ENCODE measurements at regions of chr7 and their contacts with region 1.

Region 1: DNA sequence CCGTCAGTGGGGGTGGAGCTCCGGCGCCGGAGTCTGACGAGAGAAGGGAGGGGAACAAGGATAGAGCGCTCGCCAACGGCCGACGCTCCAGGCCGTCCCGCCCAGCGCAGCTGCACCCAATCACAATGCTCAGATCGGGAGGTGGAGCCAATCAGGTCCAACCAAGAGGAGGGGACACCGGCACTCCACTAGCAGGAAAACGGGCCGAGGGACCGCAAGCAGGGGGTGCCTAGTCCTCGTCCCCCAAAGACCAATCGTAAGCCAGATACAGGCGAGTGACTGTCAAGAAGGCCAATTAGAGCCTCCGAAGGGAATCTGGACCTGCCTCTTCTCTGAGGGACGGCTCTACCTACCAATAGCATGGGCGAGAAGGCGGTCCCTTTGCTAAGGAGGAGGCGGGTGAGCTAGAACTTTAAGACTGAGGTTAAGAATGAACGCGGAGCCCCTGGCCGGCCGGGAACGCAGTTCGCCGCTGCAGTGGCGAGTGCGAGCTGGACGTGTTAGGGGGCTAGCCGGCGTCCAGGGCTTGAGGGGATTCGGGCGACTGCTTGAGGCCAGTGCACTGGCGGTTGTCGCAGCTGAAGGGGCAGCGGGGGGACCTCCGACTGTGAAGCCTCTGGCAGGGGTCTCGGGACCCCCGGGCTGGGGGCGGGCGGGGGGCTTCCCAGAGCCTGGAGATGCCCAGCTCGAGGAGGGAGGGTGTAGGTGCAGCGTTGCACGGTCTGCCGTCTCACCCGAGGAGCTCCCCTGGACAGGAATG is at the start of gene FBXO24:
- DNase-seq: peak; percentile 100
- H3K4me3 ChIP-seq: peak within 1 kb of the TSS; percentile 92
- CTCF ChIP-seq: no peak

Region 2: DNA sequence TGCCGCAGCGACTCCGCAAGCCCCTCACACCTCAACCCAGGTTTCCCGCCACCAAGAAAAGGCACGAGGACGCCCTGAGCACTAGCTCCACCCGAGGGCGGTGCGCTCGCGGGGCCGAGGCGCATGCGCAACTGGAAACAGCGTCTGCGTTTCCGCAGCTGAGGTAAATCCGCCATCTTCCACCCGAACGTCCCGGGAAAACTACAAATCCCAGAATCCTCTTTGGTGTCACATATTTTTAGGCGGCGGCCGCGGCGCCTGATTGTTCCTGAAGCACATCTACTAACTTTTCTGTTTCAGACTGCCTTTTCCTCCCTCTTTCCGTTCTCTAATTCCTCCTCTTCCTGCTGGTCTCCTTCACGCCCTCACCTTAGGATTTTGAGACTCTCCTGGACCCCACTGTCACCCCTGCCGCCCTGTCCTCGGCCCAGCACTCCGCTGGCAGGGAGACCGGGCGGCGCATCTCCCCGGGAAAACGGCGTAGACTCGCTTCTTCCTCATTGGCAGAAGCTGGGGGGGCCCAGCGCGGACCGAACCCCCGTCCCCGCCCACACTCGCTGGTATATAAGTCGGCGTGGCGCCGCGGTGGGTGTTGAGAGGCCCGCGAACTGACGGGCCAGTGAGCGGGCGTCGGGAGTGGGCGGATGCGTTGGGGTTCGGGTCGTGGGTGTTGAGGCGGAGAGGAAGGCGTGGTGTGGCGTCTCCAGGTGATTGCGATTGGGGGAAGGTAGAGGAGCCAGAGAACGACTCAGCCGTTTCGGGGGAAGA is 158.1 kb before region 1 on chr7 and contains the start of gene ZCWPW1:
- CTCF ChIA-PET with region 1: interaction called, 3 read pairs
- POLR2A ChIA-PET with region 1: interaction called, 10 read pairs
- DNase-seq: peak; percentile 81
- H3K4me3 ChIP-seq: peak within 1 kb of the TSS; percentile 92
- CTCF ChIP-seq: no peak

Region 3: DNA sequence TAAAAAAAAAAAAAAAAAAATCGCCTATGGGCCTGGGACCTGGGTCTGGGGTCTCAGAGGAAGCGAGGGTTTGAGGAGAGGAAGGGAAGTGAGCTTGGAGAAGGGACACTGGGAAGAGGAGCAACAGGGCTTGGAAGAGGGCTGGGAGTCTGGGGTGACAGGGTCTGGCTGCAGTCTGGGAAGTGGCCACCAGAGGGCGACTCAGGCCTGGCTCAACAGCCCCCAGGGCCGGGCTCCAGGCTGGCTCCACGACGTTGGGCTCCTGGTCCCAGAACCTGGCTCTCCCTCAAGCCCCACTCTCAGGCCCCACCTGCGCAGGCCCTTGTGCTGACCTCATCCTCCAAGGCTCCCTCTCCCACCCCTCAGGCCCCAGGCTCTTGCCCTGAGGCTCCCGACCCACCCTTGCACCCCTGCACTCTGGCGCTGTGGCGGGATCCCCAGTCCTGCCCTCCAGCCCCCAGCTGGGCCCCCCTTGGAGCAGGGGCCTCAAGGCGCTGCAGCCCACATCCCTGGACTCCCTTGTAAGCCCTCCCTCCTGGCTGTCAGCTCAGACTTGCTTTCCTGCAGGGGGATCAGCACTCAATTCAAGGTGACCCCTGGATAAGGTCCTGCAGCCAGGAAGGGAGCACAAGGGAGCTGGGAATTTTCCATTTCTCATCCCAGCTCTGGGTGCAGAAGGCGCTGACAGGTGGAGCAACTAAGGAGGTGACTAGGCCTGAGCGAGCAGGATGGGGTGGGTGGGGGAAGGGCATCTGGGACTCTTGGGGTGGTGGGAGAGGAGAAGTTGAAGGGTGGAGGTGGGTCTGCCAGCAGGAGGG is 117.0 kb before region 1 on chr7:
- CTCF ChIA-PET with region 1: interaction called, 11 read pairs
- POLR2A ChIA-PET with region 1: interaction called, 10 read pairs
- DNase-seq: no peak
- H3K4me3 ChIP-seq: no peak overlapping the region
- CTCF ChIP-seq: peak; percentile 98

Region 4: DNA sequence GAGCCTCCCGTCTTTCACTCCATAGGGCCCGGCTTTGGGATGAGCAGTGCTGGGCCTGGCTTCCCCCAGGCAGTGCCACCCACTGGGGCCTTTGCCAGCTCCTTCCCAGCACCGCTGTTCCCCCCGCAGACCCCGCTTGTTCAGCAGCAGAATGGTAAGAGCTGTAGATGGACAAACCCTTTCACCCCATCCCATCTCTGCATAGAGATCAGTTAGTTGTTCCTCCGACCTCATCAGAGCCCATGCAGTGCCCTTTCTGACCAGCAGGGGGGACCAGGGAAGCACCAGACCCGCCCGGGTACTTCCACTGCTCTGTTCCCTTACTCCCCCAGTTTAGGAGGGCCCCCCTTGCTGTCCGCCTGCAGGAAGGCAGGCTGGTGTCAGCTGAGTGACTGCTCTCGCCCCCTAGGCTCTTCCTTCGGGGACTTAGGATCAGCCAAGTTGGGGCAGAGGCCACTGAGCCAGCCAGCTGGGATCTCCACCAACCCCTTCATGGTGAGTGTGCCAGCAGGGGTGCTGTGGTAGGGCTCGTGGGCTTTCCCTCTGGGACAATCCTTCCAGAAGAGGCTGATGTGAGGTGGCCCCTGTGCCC is 22.5 kb before region 1 on chr7:
- CTCF ChIA-PET with region 1: interaction called, 138 read pairs
- POLR2A ChIA-PET with region 1: interaction called, 16 read pairs
- DNase-seq: no peak
- H3K4me3 ChIP-seq: no peak overlapping the region
- CTCF ChIP-seq: peak; percentile 92

Region 5: DNA sequence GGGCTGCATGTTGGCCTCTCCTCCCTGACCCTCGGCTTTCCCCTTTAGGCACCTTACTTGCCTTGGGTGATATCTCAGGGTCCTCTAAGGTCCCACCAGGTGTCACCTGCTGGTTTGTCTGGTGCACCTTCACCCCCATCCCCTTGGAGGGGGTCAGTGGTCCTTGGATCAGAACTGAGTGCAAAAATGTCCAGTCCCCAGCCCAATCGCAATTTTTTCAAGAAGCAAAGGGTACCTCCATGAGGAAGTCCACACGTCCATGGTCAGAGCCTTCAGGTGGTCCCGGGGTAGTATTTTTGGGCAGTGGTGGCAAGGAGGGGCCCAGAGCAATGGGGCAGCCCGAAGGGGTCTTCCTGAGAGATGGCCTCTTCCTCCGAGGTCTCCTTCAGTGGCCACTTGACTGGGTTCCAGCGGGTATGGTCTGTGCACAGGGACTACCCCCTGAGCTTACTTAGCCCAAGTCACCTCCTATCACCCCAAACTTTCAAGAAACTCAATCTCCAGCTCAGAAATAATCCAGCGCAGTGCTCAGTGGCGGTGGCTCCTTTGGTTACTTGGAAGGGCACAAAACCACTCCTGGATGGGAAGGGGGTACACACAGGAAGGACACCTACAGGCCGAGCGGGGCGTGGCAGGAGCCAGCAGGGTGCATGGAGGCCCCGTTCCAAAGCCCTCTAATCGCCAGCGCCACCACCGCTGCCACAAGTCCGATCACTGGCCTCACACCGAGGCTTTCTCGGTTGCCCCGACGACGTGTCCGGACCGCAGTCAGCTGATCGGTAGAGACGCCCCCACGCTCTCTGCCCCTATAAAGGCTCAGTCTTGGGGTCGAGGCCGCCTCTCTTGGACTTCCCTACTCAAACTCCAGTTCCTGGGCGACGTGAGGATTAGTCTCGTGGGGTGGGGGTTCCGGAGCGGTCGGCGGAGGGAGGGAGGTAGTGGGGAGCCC is 17.3 kb before region 1 on chr7:
- CTCF ChIA-PET with region 1: interaction called, 138 read pairs
- POLR2A ChIA-PET with region 1: interaction called, 6 read pairs
- DNase-seq: no peak
- H3K4me3 ChIP-seq: peak overlapping the region; percentile 34
- CTCF ChIP-seq: peak; percentile 39

Region 6: DNA sequence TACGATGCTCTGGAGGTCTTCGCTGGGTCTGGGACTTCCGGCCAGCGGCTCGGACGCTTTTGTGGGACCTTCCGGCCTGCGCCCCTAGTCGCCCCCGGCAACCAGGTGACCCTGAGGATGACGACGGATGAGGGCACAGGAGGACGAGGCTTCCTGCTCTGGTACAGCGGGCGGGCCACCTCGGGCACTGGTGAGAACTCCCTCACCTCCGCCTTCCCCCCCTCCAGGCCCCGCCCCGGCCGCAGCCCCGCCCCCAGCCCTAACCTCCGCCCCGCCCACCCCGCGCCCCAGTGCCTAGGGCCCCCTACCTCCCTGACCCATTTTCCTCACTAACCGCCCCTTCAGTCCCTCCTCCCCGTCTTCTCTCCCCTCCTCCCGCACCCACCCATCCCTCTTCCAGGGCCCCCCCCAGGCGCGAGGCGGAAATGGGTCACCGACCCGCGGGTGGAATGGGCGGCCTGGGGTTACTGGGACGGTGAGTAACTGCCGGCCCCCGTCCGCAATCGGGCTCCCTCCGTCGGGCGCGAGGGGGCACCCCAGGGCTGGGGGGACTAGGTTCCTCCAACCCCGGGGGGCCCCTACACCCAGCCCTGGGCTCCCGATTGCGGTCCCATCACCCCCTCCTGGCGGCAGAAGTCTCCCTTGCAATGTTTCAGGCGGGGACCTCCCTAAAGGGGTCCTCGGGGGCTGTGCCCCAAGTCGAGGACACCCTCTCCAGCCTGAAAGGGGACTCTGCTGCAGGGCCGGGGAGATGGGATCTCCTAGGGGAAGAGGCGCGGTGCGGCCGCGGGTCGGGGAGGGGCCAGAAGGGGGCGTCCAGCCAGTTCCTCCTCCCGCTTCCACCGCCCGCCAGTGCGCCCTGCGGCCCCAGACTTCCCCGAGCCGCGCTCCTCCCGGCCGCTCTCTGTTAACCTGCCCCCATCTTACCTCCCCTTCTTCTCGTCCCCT is 17.9 kb after region 1 on chr7:
- CTCF ChIA-PET with region 1: interaction called, 14 read pairs
- POLR2A ChIA-PET with region 1: interaction called, 48 read pairs
- DNase-seq: no peak
- H3K4me3 ChIP-seq: peak overlapping the region; percentile 98
- CTCF ChIP-seq: peak; percentile 48

Measured in AG04449 (cell line).